AG04449 (cell line): ENCODE measurements at regions of chr1 and their contacts with region 1.

Region 1: DNA sequence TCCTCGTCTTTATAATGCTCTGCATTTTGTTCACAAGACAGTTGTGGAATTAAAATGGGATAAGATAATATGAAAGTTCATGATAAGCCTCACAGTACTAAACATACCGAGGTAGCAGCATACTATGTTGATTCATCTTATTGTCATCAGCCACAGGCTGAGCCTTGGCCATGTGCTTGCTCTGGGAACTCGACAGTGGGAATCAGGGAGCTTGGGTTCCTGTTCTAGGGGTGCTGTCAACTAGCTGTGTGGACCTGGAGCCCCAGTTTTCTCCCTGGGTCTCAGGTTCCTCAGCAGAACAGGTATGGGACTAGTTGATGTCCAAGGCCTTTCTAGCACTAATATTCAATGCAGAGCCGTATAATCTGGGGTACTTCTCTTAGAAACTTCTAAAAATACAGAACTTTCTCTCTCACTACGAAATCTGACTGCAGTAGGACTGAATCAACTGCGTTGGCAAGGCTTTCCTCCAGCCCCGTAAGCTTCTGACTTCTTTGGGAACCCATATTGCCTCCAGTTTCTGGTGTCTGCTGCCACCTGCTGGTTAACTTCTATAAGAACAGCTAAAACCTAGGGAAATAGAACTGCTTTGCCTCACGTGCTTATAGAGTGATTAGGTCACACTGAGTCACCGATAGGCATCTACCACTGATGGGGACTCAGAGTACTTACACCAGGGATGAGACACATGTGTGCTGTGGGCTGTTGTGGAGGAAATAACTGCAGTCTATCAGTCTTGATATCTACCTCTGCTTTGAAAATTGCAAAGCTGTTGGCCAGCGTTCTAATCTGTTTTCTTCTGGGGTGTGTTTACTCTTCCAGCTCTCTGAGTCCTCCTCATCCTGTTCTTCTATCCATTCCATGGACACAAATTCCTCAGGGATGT is 110.9 kb downstream of the RGL1 start:
- DNase-seq: peak; percentile 92
- H3K4me3 ChIP-seq: peak overlapping the region; percentile 32
- CTCF ChIP-seq: peak; percentile 58

Region 2: DNA sequence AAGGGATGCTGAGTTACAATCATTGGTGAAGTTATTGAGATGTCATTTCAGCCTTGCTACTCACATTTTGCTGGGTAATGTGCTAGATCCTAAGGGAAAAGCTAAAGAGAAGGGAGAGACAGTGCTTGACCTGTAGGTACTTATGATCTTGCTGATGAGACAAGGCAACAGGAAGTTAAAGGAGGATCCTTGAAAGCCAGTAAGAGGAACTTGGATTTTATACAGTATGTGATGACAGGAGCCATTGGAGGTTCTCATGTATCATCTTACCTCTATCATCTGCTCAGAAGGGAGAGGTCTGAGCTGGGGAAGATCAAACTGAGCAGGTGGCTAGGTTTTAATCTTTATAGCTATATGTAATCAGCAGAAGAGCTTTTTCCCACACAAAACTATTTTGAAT is 269.1 kb before region 1 on chr1:
- CTCF ChIA-PET with region 1: interaction called, 284 read pairs
- POLR2A ChIA-PET with region 1: no interaction called
- DNase-seq: no peak
- H3K4me3 ChIP-seq: no peak overlapping the region
- CTCF ChIP-seq: no peak

Region 3: DNA sequence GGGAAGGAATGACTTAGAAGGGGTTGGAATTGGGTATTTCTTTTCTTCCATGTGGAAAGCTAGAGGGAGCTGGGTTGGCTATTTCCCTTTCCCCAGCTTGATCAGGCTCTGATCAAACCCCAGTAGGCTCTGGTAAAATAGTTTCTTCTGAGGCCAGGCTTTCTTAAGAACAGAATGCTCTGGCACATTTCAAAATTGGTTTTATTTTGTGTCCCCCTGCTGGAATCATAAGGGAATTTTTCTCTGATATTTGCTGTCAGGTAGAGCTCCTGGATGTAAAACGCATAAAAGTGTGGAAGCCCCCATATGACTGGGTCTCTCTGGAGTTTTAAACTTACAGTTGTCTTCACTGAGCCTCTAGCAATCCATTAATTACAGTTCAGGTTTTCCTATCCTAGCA is 245.7 kb before region 1 on chr1:
- CTCF ChIA-PET with region 1: interaction called, 13 read pairs
- POLR2A ChIA-PET with region 1: no interaction called
- DNase-seq: no peak
- H3K4me3 ChIP-seq: no peak overlapping the region
- CTCF ChIP-seq: no peak

Region 4: GRCh38 chr1:183694066-183694465 is 221.8 kb before region 1 on chr1:
- CTCF ChIA-PET with region 1: interaction called, 10 read pairs
- POLR2A ChIA-PET with region 1: no interaction called
- DNase-seq: no peak
- H3K4me3 ChIP-seq: no peak overlapping the region
- CTCF ChIP-seq: no peak

Region 5: GRCh38 chr1:183898001-183898396 is 17.9 kb before region 1 on chr1:
- CTCF ChIA-PET with region 1: interaction called, 12 read pairs
- POLR2A ChIA-PET with region 1: no interaction called
- DNase-seq: no peak
- H3K4me3 ChIP-seq: no peak overlapping the region
- CTCF ChIP-seq: no peak

Region 6: DNA sequence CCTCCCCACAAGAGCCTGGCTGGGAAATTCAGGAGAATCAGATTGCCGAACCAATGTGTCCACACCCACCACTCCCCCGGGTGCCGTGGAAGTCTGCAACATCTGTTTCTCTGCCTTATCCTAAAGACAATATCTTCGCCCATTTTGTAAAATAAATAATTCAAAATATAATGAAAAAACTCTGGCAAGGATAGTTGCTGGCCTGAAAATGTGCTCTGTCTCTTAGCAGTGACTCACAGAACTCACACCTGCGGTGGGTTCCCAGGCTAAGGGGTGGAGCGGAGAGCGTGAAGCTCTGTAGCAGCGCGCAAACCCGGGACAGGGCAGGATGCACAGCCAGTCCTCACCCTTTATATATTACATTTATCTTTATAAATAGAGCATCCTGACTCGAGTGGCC is 21.7 kb after region 1 on chr1:
- CTCF ChIA-PET with region 1: interaction called, 21 read pairs
- POLR2A ChIA-PET with region 1: no interaction called
- DNase-seq: no peak
- H3K4me3 ChIP-seq: no peak overlapping the region
- CTCF ChIP-seq: no peak

Region 7: GRCh38 chr1:184051485-184052193 is 135.8 kb after region 1 on chr1 and contains the start of gene TSEN15:
- CTCF ChIA-PET with region 1: interaction called, 10 read pairs
- POLR2A ChIA-PET with region 1: interaction called, 3 read pairs
- DNase-seq: no peak
- H3K4me3 ChIP-seq: peak within 1 kb of the TSS; percentile 81
- CTCF ChIP-seq: no peak

Region 8: GRCh38 chr1:184082541-184083415 is 166.9 kb after region 1 on chr1:
- CTCF ChIA-PET with region 1: no interaction called
- POLR2A ChIA-PET with region 1: no interaction called
- DNase-seq: no peak
- H3K4me3 ChIP-seq: no peak overlapping the region
- CTCF ChIP-seq: no peak